Activated B cell treated with CpG ODN at 0.5 μM for 24 hours (primary cell): ENCODE measurements at regions of chr2 and their contacts with region 1.

Region 1: GRCh38 chr2:47906157-47907038 is at the start of gene FBXO11:
- DNase-seq: peak; percentile 85
- ATAC-seq: peak; percentile 85
- H3K4me3 Mint-ChIP-seq: peak within 1 kb of the TSS; percentile 93
- H3K27ac Mint-ChIP-seq: peak within 1 kb of the TSS; percentile 99
- H3K4me1 Mint-ChIP-seq: peaks cover 42% of the 10 kb centered on the region
- H3K27me3 Mint-ChIP-seq: no peaks in the 10 kb centered on the region
- CTCF ChIP-seq: no peak
- total RNA-seq, gene FBXO11: 77.8 and 89.1 TPM in 2 replicates

Region 2: DNA sequence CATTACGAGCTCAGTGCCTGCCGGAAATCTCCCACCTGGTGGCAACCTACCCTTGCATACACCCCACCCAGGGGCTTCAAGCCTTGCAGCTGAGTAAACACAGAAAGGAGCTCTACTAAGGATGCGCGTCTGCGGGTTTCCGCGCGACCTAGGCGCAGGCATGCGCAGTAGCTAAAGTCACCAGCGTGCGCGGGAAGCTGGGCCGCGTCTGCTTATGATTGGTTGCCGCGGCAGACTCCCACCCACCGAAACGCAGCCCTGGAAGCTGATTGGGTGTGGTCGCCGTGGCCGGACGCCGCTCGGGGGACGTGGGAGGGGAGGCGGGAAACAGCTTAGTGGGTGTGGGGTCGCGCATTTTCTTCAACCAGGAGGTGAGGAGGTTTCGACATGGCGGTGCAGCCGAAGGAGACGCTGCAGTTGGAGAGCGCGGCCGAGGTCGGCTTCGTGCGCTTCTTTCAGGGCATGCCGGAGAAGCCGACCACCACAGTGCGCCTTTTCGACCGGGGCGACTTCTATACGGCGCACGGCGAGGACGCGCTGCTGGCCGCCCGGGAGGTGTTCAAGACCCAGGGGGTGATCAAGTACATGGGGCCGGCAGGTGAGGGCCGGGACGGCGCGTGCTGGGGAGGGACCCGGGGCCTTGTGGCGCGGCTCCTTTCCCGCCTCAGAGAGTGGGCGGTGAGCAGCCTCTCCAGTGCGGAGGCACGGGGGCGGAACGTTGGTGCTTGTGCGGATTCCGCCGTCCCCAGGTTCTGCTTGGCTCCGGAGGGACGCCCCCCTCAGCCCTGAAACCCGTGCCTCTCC is 503.4 kb before region 1 on chr2 and contains the start of gene MSH2:
- CTCF ChIA-PET with region 1: no interaction called
- POLR2A ChIA-PET with region 1: no interaction called
- intact Hi-C with region 1: loop called (anchors 2 kb)
- DNase-seq: peak; percentile 83
- ATAC-seq: peak; percentile 97
- H3K4me3 Mint-ChIP-seq: peak within 1 kb of the TSS; percentile 95
- H3K27ac Mint-ChIP-seq: peak within 1 kb of the TSS; percentile 90
- H3K4me1 Mint-ChIP-seq: peaks cover 25% of the 10 kb centered on the region
- H3K27me3 Mint-ChIP-seq: no peaks in the 10 kb centered on the region
- CTCF ChIP-seq: no peak
- total RNA-seq, gene MSH2: 23.1 and 25.2 TPM in 2 replicates

Region 3: DNA sequence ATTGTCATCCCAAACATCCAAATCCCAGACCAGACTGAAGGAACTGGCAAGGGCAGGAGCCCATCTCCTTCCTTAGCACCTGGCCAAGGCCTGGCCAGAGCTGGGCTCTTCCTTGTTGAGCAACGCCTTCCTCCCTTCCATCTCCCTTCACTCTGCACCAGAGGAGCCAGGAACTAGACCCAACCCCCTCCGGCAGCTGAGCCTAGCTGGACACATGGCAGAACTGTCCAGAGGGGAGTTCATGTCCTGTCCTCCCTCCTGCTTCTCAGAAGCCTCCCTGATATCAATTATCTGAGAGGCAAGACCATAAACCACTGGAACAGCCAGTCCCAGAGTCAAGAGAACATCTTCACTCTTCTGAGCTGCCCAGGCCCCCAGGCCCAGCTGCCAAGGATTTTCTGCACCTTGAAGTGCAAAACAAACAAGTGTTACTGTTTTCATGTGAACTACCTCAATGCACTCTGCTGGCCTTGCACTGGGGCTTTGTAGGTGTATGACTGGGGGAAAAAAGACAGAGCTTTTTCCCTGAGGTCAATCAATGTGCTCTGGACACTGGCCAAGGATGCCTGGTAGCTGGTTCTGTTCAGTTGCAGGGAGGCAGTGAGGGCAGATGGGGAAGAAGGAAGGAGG is 231.1 kb before region 1 on chr2:
- CTCF ChIA-PET with region 1: no interaction called
- POLR2A ChIA-PET with region 1: no interaction called
- intact Hi-C with region 1: no loop called
- DNase-seq: no peak
- ATAC-seq: no peak
- H3K4me3 Mint-ChIP-seq: no peak overlapping the region
- H3K27ac Mint-ChIP-seq: no peak overlapping the region
- H3K4me1 Mint-ChIP-seq: no peaks in the 10 kb centered on the region
- H3K27me3 Mint-ChIP-seq: no peaks in the 10 kb centered on the region
- CTCF ChIP-seq: no peak

Region 4: GRCh38 chr2:47833516-47833968 is 72.9 kb before region 1 on chr2:
- CTCF ChIA-PET with region 1: no interaction called
- POLR2A ChIA-PET with region 1: interaction called, 3 read pairs
- intact Hi-C with region 1: loop called (anchors 2 kb)
- DNase-seq: no peak
- ATAC-seq: peak; percentile 18
- H3K4me3 Mint-ChIP-seq: no peak overlapping the region
- H3K27ac Mint-ChIP-seq: no peak overlapping the region
- H3K4me1 Mint-ChIP-seq: no peaks in the 10 kb centered on the region
- H3K27me3 Mint-ChIP-seq: no peaks in the 10 kb centered on the region
- CTCF ChIP-seq: no peak

Region 5: DNA sequence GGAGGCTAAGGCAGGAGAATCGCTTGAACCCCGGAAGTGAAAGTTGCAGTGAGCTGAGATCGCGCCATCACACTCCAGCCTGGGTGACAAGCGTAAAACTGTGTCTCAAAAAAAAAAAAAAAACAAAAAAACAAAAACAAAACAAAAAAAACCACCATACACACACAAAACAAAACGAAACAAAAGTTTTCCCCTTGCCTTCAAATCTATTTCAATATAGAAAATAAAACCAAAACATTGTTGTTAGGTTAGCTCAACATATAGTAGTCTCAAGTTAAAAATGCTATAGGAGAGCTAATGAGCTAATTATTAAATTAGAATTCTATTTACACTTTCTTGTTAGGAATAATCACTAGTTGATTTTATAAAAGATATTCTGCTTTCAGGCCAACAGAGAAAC is 43.4 kb before region 1 on chr2:
- CTCF ChIA-PET with region 1: interaction called, 15 read pairs
- POLR2A ChIA-PET with region 1: interaction called, 3 read pairs
- intact Hi-C with region 1: no loop called
- DNase-seq: no peak
- ATAC-seq: no peak
- H3K4me3 Mint-ChIP-seq: no peak overlapping the region
- H3K27ac Mint-ChIP-seq: no peak overlapping the region
- H3K4me1 Mint-ChIP-seq: peaks cover 57% of the 10 kb centered on the region
- H3K27me3 Mint-ChIP-seq: no peaks in the 10 kb centered on the region
- CTCF ChIP-seq: no peak

Region 6: DNA sequence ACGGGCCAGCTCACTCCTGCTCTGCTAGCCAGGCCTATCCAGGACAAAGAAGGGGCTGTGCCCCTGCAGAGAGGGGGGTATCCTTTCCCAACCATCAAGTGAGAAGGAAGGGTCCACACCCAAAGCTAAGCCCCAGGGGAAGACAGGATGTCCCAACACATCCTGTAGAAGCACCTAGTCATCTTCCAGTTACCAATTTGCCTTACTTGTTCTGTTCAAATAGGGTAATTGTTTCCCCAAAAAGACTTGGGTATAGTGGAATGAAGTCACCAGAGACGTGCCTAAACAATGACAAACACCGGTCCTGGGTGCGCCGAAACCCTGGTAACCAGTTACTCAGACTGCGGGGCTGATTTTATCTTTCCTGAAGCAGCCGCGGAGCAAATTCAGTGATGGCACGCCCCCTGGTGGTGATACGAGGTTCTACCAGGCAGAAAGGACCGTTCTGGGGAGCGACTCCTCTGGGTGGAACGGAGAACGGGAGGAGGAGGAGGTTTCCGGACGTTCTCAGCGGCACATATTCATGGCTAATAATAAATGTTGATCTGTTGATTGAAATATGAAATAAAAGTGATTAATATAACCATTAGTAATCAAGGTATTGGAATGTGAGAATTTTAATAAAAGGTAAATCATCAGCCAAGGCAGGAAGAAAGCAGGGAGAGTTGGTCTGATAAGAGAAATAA is 514.3 kb after region 1 on chr2:
- CTCF ChIA-PET with region 1: no interaction called
- POLR2A ChIA-PET with region 1: interaction called, 3 read pairs
- intact Hi-C with region 1: loop called (anchors 1 kb)
- DNase-seq: peak; percentile 80
- ATAC-seq: peak; percentile 91
- H3K4me3 Mint-ChIP-seq: peak overlapping the region; percentile 4
- H3K27ac Mint-ChIP-seq: no peak overlapping the region
- H3K4me1 Mint-ChIP-seq: peaks cover 14% of the 10 kb centered on the region
- H3K27me3 Mint-ChIP-seq: peaks cover 8% of the 10 kb centered on the region
- CTCF ChIP-seq: peak; percentile 66